ENCODE measurements at regions of chr4 and their contacts with region 1.

Region 1: GRCh38 chr4:121096629-121097028 is 24.3 kb upstream of the NDNF start:
- DNase-seq: no peak
- ATAC-seq: peak in 1 of 2 donors; percentile 73
- H3K4me3 ChIP-seq: no peak overlapping the region
- H3K27ac ChIP-seq: no peak overlapping the region
- H3K4me1 ChIP-seq: peaks cover 8% of the 10 kb centered on the region
- H3K27me3 ChIP-seq: no peaks in the 10 kb centered on the region
- CTCF ChIP-seq: peak; percentile 53

Region 2: DNA sequence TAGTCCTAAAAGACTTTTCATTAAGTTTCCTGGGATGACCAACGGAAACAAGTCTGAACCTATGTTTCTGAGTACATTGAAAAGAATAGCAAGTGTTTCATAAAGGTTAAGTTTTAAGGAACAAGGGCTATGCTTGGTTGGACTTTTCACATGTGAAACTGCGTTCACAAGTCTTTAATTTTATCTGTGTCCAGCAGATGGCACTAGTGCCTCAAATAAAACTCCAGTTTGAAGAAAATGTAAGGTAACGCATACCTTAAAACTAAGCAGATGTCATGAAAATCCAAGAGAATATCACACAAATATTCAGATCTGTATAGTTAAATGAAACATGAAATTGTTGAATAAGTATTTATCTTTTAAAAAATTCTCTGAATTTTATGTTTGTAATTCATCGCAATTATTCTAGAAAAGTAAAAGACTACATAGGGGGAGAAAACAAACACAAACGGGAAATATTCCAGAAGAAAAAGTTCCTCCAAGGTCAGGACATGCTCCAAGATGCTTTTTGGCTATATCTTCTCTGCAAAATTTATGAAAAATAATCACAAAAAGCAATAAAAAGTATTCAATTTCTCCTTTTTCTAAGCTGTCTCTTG is 940.4 kb before region 1 on chr4:
- intact Hi-C with region 1: loop called (anchors 5 kb)
- DNase-seq: no peak
- ATAC-seq: peak in 1 of 2 donors; percentile 47
- H3K4me3 ChIP-seq: no peak overlapping the region
- H3K27ac ChIP-seq: no peak overlapping the region
- H3K4me1 ChIP-seq: no peaks in the 10 kb centered on the region
- H3K27me3 ChIP-seq: no peaks in the 10 kb centered on the region
- CTCF ChIP-seq: peak; percentile 74

Region 3: DNA sequence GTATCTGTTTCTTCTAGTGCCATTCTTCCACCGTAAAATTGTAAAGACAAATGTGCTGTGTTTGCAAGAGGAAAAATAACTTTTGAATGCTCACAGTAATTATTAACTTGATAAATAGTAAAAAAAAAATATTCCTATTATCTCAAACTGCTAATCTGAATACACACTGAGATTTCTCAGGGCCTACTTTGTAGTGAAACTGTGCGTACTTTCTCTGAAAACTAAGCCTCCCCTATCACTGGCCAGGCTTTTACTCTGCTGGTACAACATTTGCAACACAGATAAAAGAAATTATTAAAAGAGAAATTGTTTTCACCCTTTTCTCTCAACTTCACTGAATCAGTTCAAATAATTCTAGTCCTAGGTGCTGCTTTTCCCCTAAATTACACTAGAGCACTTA is 311.4 kb before region 1 on chr4:
- intact Hi-C with region 1: no loop called
- DNase-seq: no peak
- ATAC-seq: no peak
- H3K4me3 ChIP-seq: no peak overlapping the region
- H3K27ac ChIP-seq: no peak overlapping the region
- H3K4me1 ChIP-seq: no peaks in the 10 kb centered on the region
- H3K27me3 ChIP-seq: no peaks in the 10 kb centered on the region
- CTCF ChIP-seq: no peak

Measured in lower lobe of right lung (tissue), 2 donors.